MCF 10A (cell line): ENCODE measurements at regions of chr5 and their contacts with region 1.

Region 1: GRCh38 chr5:57432876-57433275 is 49.7 kb downstream of the ACTBL2 start:
- DNase-seq: peak; percentile 50
- H3K4me3 Mint-ChIP-seq: no peak overlapping the region
- H3K27ac Mint-ChIP-seq: no peak overlapping the region
- H3K4me1 Mint-ChIP-seq: peaks cover 27% of the 10 kb centered on the region
- H3K27me3 Mint-ChIP-seq: no peaks in the 10 kb centered on the region
- CTCF ChIP-seq: peak; percentile 42

Region 2: GRCh38 chr5:57338068-57338892 is 94.6 kb before region 1 on chr5:
- CTCF ChIA-PET with region 1: no interaction called
- POLR2A ChIA-PET with region 1: no interaction called
- intact Hi-C with region 1: loop called (anchors 1 kb)
- DNase-seq: peak; percentile 58
- H3K4me3 Mint-ChIP-seq: no peak overlapping the region
- H3K27ac Mint-ChIP-seq: no peak overlapping the region
- H3K4me1 Mint-ChIP-seq: no peaks in the 10 kb centered on the region
- H3K27me3 Mint-ChIP-seq: no peaks in the 10 kb centered on the region
- CTCF ChIP-seq: peak; percentile 47

Region 3: GRCh38 chr5:57383093-57383861 is 49.6 kb before region 1 on chr5:
- CTCF ChIA-PET with region 1: no interaction called
- POLR2A ChIA-PET with region 1: no interaction called
- intact Hi-C with region 1: loop called (anchors 2 kb)
- DNase-seq: peak; percentile 73
- H3K4me3 Mint-ChIP-seq: peak overlapping the region; percentile 12
- H3K27ac Mint-ChIP-seq: no peak overlapping the region
- H3K4me1 Mint-ChIP-seq: peaks cover 12% of the 10 kb centered on the region
- H3K27me3 Mint-ChIP-seq: no peaks in the 10 kb centered on the region
- CTCF ChIP-seq: peak; percentile 27

Region 4: GRCh38 chr5:57422341-57422740 is 10.5 kb before region 1 on chr5:
- CTCF ChIA-PET with region 1: no interaction called
- POLR2A ChIA-PET with region 1: no interaction called
- intact Hi-C with region 1: no loop called
- DNase-seq: no peak
- H3K4me3 Mint-ChIP-seq: no peak overlapping the region
- H3K27ac Mint-ChIP-seq: no peak overlapping the region
- H3K4me1 Mint-ChIP-seq: no peaks in the 10 kb centered on the region
- H3K27me3 Mint-ChIP-seq: no peaks in the 10 kb centered on the region
- CTCF ChIP-seq: no peak